Heart right ventricle (tissue), 16 donors: ENCODE measurements at regions of chr10 and their contacts with region 1.

Region 1: DNA sequence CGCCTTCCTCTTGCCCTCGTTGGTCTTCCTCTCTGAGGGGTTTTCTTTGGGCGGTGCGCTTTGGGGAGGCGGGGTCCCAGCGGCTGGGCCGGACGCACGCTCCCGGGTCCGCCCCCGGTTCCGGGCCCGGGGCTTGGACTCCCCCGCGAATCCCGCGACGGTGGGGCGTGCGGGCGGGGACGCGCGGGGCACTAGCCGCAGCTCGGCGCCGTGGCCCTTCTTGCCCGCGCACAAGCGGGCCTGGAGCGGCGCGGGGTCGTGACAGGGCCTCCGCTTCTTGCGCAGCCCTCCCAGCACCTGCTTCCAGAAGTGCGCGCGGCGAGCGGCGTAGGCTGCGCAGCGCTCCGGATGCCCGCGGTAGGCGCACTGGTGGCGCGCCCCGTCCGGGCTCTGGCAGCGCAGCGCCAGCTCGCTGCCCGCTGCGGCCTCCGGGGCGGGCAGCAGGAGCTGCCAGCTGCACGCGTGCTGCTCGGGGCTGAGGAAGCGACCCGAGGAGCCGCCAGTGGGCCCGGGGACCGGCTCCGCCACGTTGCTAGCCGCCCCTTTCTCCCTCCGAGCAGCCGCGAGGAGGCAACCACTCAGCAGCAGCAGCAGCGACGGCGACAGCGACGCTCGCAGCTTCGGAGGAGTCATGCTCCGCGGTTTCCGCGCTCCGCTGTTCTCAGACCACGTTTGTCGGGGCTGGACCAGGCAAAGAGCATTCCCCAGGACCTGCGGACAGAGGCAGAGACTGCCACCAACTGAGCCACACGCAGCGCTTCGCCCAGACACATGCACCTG is 759 bp downstream of the FGFBP3 start:
- DNase-seq: peak; percentile 65 to 76
- ATAC-seq: peak; percentile 95 to 97 (median 96)
- H3K4me3 ChIP-seq: peak overlapping the region; percentile 54 to 95 (median 80)
- H3K27ac ChIP-seq: peak overlapping the region; percentile 39 to 85 (median 70)
- H3K4me1 ChIP-seq: peaks cover 0 to 23% (median 12%) of the 10 kb centered on the region in 9 donors
- H3K27me3 ChIP-seq: peaks cover 0 to 4% (median 0%) of the 10 kb centered on the region in 7 donors
- CTCF ChIP-seq: peak in 7 of 9 donors; percentile 25 to 72 (median 50)

Region 2: DNA sequence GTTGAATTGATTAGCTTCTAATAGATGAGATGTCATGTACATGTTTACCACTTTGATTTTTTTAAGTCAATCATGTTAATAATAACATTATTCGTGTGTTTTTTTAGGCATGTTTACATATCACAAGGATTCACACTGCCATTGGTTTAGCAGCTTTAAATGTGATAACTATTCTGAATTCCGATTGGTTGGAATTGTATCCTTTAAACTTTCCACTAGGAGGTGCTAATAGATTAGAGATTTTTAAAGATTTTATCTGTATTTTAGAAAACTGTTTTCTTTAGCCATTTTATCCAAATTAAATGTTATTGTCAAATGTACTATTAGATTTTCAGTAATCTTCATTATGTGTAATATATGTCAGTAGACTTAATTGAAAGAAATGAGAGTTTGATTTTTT is 415.2 kb before region 1 on chr10:
- intact Hi-C with region 1: loop called in 2 of 10 experiments (anchors 5 to 10 kb)
- DNase-seq: no peak
- ATAC-seq: no peak
- H3K4me3 ChIP-seq: no peak overlapping the region
- H3K27ac ChIP-seq: no peak overlapping the region
- H3K4me1 ChIP-seq: no peaks in the 10 kb centered on the region
- H3K27me3 ChIP-seq: no peaks in the 10 kb centered on the region
- CTCF ChIP-seq: peak in 8 of 9 donors; percentile 35 to 72 (median 55)

Region 3: GRCh38 chr10:91758303-91759146 is 150.0 kb before region 1 on chr10:
- intact Hi-C with region 1: loop called in 9 of 10 experiments (anchors 2 to 5 kb)
- DNase-seq: no peak
- ATAC-seq: peak in 1 of 8 donors; percentile 53
- H3K4me3 ChIP-seq: no peak overlapping the region
- H3K27ac ChIP-seq: no peak overlapping the region
- H3K4me1 ChIP-seq: no peaks in the 10 kb centered on the region
- H3K27me3 ChIP-seq: peaks cover 0 to 8% (median 0%) of the 10 kb centered on the region in 7 donors
- CTCF ChIP-seq: peak in 8 of 9 donors; percentile 34 to 72 (median 60)

Region 4: DNA sequence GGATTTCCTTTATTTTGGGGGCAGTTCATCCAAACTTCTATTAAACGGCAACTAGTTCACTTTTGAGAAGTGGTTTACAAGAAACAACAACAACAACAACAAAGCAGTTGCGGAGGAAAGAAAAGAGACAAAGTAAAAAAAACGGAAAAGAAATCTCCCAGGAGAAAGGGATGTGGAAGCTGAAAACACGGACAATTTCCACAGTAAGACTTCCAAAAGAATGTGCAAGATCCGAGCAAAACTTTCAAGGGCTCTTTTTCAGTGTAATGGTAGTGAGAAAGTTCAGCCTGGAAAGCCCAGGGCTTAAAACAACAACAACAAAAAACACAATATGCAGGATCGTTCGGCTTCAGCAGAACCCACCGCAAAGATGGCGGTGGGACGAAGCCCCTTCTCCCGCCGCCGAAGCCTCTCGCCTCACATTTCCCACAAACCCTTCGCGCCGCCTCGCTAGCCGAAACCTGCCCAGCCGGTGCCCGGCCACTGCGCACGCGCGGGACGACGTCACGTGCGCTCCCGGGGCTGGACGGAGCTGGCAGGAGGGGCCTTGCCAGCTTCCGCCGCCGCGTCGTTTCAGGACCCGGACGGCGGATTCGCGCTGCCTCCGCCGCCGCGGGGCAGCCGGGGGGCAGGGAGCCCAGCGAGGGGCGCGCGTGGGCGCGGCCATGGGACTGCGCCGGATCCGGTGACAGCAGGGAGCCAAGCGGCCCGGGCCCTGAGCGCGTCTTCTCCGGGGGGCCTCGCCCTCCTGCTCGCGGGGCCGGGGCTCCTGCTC is 110.5 kb before region 1 on chr10 and contains the start of gene TNKS2:
- intact Hi-C with region 1: loop called in 2 of 10 experiments (anchors 5 to 10 kb)
- DNase-seq: peak; percentile 94 to 97
- ATAC-seq: peak; percentile 97 to 98 (median 98)
- H3K4me3 ChIP-seq: peak within 1 kb of the TSS; percentile 71 to 96 (median 85)
- H3K27ac ChIP-seq: peak within 1 kb of the TSS; percentile 88 to 98 (median 96)
- H3K4me1 ChIP-seq: peaks cover 2 to 55% (median 44%) of the 10 kb centered on the region in 9 donors
- H3K27me3 ChIP-seq: no peaks in the 10 kb centered on the region
- CTCF ChIP-seq: peak in 1 of 9 donors; percentile 17
- total RNA-seq, gene TNKS2: 11.8 to 21.1 (median 14.3) TPM

Region 5: DNA sequence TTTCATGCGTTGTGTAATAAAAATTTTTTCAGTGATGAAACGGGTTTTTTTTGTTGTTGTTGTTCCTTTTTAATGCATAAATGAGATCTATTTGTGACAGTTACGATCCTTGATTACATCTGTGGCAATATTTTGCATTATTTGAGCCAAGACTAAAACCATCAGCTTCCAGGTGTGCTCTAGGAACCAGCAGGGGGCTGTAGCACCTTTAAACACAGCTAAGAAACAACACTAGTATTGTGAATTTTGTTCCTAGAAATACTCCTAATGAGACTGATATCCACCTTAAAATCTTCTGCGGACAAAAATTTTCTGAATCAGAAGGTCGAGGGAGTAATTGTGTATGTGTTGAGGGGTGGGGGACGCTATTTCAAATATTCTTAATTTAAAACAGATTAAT is 51.9 kb before region 1 on chr10:
- intact Hi-C with region 1: loop called in 1 of 10 experiments (anchors 10 kb)
- DNase-seq: no peak
- ATAC-seq: no peak
- H3K4me3 ChIP-seq: no peak overlapping the region
- H3K27ac ChIP-seq: no peak overlapping the region
- H3K4me1 ChIP-seq: no peaks in the 10 kb centered on the region
- H3K27me3 ChIP-seq: no peaks in the 10 kb centered on the region
- CTCF ChIP-seq: peak in 5 of 9 donors; percentile 9 to 38 (median 28)

Region 6: GRCh38 chr10:91953600-91954160 is 45.2 kb after region 1 on chr10:
- intact Hi-C with region 1: no loop called
- DNase-seq: no peak
- ATAC-seq: no peak
- H3K4me3 ChIP-seq: no peak overlapping the region
- H3K27ac ChIP-seq: no peak overlapping the region
- H3K4me1 ChIP-seq: no peaks in the 10 kb centered on the region
- H3K27me3 ChIP-seq: no peaks in the 10 kb centered on the region
- CTCF ChIP-seq: no peak